ENCODE measurements at regions of chr6 and their contacts with region 1.

Region 1: GRCh38 chr6:71468841-71469750 is 180.5 kb downstream of the OGFRL1 start:
- DNase-seq: peak; percentile 53 to 67
- H3K4me3 ChIP-seq: no peak overlapping the region
- H3K27ac ChIP-seq: no peak overlapping the region
- H3K4me1 ChIP-seq: peaks cover 6% of the 10 kb centered on the region
- H3K27me3 ChIP-seq: no peaks in the 10 kb centered on the region
- CTCF ChIP-seq: no peak

Region 2: GRCh38 chr6:71444222-71444621 is 24.9 kb before region 1 on chr6:
- CTCF ChIA-PET with region 1: no interaction called
- POLR2A ChIA-PET with region 1: interaction called, 10 read pairs
- intact Hi-C with region 1: no loop called
- DNase-seq: no peak
- H3K4me3 ChIP-seq: no peak overlapping the region
- H3K27ac ChIP-seq: no peak overlapping the region
- H3K4me1 ChIP-seq: no peaks in the 10 kb centered on the region
- H3K27me3 ChIP-seq: no peaks in the 10 kb centered on the region
- CTCF ChIP-seq: no peak

Region 3: GRCh38 chr6:71489747-71490315 is 20.7 kb after region 1 on chr6:
- CTCF ChIA-PET with region 1: no interaction called
- POLR2A ChIA-PET with region 1: interaction called, 17 read pairs
- intact Hi-C with region 1: no loop called
- DNase-seq: peak; percentile 83 to 98
- H3K4me3 ChIP-seq: no peak overlapping the region
- H3K27ac ChIP-seq: peak overlapping the region; percentile 81
- H3K4me1 ChIP-seq: peaks cover 25% of the 10 kb centered on the region
- H3K27me3 ChIP-seq: no peaks in the 10 kb centered on the region
- CTCF ChIP-seq: no peak

Measured in PC-9 (cell line).